ENCODE measurements at regions of chr11 and their contacts with region 1.

Region 1: DNA sequence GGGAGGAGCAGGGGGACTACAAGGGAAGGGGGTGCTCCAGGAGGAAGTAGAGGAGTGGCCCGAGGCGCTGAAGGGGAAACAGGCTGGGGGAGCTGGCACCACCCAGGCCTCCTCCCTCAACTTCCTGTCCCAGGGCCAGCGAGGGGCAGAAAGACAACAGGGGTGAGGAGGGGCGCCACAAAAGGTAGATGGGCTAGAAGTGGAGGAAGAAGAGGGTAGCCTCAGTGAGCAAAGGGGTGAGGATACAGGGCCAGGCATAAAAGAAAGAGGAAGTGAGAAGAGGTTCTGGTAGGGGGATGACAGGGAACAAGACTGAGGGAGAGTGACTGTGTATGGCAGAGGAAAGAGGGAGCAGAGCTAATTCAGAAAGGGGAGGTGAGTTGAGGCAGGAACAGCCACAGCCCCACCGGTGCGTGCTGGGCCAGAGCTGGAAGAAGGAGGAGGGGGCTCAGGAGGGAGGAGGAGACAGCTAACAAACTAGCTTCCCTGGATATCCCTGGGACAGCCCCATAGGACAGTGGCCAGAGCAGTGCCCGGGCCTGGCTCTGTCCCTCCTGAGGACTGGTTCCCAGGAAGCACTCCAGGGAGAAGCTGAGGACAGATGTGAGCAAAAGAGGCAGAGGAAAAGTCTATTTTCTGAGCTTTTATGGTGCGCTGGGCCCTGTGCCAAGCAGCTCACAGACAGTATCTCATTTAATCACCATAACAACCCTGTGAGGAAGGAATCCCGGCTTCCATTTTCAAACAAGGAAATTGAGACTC is 8.5 kb downstream of the DCHS1 start:
- DNase-seq: peak; percentile 73
- H3K4me3 ChIP-seq: peak overlapping the region in 1 of 2 experiments; percentile 26; a peak in 1 of 4 replicates
- H3K27ac ChIP-seq: peak overlapping the region; percentile 13 to 98; a peak in 3 of 4 replicates
- H3K4me1 ChIP-seq: peaks cover 6 to 40% of the 10 kb centered on the region in 2 experiments; a peak in 2 of 4 replicates
- H3K27me3 ChIP-seq: no peaks in the 10 kb centered on the region
- CTCF ChIP-seq: no peak
- EP300 ChIP-seq: no peak
- RAD21 ChIP-seq: no peak

Region 2: GRCh38 chr11:6612213-6613041 is 34.7 kb before region 1 on chr11 and contains the start of gene TAF10:
- CTCF ChIA-PET with region 1: interaction called, 13 read pairs
- POLR2A ChIA-PET with region 1: interaction called, 16 read pairs
- DNase-seq: peak; percentile 95
- H3K4me3 ChIP-seq: peak within 1 kb of the TSS; percentile 65 to 93
- H3K27ac ChIP-seq: peak within 1 kb of the TSS; percentile 94 to 99
- H3K4me1 ChIP-seq: peaks cover 10 to 32% of the 10 kb centered on the region in 2 experiments
- H3K27me3 ChIP-seq: no peaks in the 10 kb centered on the region
- CTCF ChIP-seq: peak; percentile 62
- EP300 ChIP-seq: no peak
- RAD21 ChIP-seq: no peak
- polyA plus RNA-seq, gene TAF10: 163 and 213 TPM in 2 replicates

Region 3: GRCh38 chr11:6619004-6619745 is 27.9 kb before region 1 on chr11 and contains the start of gene TPP1:
- CTCF ChIA-PET with region 1: interaction called, 6 read pairs
- POLR2A ChIA-PET with region 1: interaction called, 29 read pairs
- DNase-seq: peak; percentile 97
- H3K4me3 ChIP-seq: peak within 1 kb of the TSS; percentile 68 to 90
- H3K27ac ChIP-seq: peak within 1 kb of the TSS; percentile 49 to 51; a peak in 2 of 4 replicates
- H3K4me1 ChIP-seq: peaks cover 7 to 9% of the 10 kb centered on the region in 2 experiments; a peak in 3 of 4 replicates
- H3K27me3 ChIP-seq: no peaks in the 10 kb centered on the region
- CTCF ChIP-seq: no peak
- EP300 ChIP-seq: no peak
- RAD21 ChIP-seq: no peak
- polyA plus RNA-seq, gene TPP1: 94.0 and 105 TPM in 2 replicates

Region 4: GRCh38 chr11:6771926-6772893 is 125.1 kb after region 1 on chr11 and contains the start of gene OR2AG2:
- CTCF ChIA-PET with region 1: no interaction called
- POLR2A ChIA-PET with region 1: no interaction called
- DNase-seq: no peak
- H3K4me3 ChIP-seq: no peak within 1 kb of the TSS
- H3K27ac ChIP-seq: no peak within 1 kb of the TSS
- H3K4me1 ChIP-seq: no peaks in the 10 kb centered on the region
- H3K27me3 ChIP-seq: no peaks in the 10 kb centered on the region; the same call in 1 of the 2 replicates
- CTCF ChIP-seq: no peak
- EP300 ChIP-seq: no peak
- RAD21 ChIP-seq: no peak
- polyA plus RNA-seq, gene OR2AG2: not detected in 2 replicates

Measured in SK-N-SH (cell line).